ENCODE measurements at regions of chr7 and their contacts with region 1.

Region 1: DNA sequence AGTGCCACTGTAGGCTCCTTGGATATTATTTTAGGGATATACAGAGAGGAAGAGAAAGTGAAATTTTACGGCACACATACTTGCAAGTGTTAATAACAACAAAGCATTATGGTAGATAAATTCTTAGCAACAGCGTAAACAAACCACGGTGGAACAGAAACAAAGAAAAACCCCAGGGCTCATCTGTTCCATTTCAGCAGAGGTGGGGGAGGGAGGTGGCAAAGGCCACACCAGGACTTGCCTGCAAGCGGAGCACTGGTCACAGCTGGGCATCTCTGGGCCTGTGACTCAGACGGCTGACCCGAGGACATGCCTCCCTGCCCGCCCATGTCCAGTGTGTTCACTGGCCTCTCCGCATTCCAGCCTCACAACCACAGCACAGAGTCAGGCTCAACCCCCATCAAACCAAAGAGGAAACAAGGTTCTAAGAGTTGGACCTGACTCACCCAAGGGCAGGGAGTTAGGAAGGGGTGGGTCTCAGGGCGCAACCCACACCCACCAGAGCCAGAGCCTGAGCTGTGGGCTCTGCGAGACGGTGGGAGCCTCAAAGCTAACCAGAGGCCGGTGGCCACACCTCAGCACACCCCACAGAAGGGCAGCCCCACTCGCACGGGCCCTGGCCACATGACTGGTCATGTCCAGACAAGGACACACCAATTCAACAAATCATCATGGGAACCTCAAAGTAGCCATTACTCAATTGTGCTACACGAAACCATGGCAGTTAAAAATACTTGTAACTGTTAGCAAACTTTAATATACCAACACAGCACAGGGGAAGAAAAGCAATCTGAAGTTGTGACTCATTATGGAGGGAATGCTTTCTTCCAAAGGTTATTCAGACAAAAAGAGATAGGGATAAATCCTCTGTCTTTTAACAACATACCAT is 10.7 kb downstream of the ESYT2 start:
- DNase-seq: peak; percentile 95
- H3K4me3 Mint-ChIP-seq: peak overlapping the region; percentile 89
- H3K27ac Mint-ChIP-seq: peak overlapping the region; percentile 96
- H3K4me1 Mint-ChIP-seq: peaks cover 81% of the 10 kb centered on the region
- H3K27me3 Mint-ChIP-seq: no peaks in the 10 kb centered on the region

Region 2: DNA sequence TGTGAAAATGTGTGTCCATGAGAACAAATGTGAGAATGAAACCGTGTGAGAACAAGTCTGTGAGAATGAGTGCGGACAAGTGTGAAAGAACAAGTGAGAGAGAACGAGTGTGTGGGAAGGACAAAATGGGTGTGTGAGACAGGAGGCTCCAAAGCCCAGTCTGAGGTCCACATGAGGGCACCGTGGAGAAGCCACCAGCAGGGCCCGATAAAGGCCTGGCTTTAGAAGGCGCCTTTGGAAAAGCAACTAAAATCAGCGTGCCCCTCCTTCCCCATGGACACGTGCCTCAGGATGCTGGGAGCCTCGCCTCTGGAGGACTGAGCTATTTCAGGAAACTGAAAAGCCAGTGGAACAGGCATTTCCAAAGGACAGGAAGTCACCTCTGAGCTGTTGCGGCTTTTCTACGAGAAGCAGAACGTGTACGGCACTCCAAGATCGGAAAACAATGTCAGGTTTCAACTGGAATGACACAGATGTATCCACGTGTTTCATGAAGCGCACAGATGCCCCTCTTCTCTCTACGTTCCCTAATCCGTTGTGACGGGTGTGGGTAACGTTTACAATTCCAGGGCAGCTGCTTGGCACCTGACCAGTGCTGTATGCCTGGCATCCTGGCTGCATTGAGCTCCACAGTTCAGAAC is 35.7 kb before region 1 on chr7:
- intact Hi-C with region 1: no loop called
- DNase-seq: peak; percentile 66
- H3K4me3 Mint-ChIP-seq: no peak overlapping the region
- H3K27ac Mint-ChIP-seq: no peak overlapping the region
- H3K4me1 Mint-ChIP-seq: peaks cover 2% of the 10 kb centered on the region
- H3K27me3 Mint-ChIP-seq: no peaks in the 10 kb centered on the region

Region 3: DNA sequence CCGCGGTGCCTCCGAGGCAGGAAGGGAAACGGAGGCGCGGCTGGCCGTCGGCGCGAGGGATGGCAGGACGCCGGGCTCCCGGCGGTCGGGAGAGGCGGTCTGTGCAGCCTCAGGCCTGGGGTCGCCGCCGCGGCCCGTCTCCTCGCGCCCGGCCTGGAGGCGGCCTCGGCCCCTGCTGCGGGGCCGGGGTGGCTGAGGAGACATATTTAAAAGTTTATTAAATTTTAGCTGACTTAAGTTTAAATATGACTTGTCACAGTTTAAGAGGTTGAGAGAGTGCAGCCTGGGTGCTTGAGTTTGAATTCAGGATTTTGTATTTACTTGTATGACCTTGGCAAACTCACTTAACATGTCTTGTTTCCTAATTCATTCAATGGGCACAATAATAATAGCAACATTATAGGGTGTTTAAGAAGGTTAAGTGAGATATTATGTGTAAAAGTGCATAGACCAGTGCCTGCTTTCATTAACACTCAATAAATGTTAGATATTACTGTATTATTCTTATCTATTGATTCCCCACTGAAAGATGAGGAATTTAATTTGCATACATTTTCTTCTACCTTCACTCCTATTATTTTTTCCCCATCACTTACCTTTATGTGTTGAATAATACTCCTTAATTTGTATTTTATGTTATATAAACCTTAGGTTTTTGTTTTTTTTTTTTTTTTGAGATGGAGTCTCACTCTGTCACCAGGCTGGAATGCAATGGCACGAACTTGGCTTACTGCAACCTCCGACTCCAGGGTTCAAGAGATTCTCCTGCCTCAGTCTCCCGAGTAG is 38.5 kb after region 1 on chr7:
- intact Hi-C with region 1: loop called (anchors 2 kb)
- DNase-seq: no peak
- H3K4me3 Mint-ChIP-seq: peak overlapping the region; percentile 99
- H3K27ac Mint-ChIP-seq: peak overlapping the region; percentile 51
- H3K4me1 Mint-ChIP-seq: peaks cover 28% of the 10 kb centered on the region
- H3K27me3 Mint-ChIP-seq: no peaks in the 10 kb centered on the region

Measured in activated CD4-positive, alpha-beta T cell treated with anti-CD3 and anti-CD28 coated beads, Interleukin-2, amount 10 ng/mL, durations not matched to agents 24 days and 14 days (primary cell).